ENCODE measurements at regions of chr4 and their contacts with region 1.

Region 1: DNA sequence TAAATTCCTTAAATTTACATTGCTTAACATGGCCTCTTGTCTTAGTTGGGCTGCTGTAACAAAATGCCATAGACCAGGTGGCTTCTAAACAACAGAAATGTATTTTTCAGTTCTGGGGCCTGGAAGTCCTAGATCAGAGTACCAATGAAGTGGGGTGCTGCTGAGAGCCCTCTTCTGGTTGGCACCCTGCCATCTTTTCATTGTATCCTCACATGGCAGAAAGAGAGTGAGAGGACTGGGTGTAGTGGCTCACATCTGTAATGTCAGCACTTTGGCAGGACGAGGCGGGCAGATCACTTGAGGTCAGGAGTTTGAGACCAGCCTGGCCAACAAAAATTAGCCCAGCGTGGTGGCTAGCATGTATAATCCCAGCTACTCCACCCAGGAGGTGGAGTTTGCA is 12.0 kb upstream of the KLB start:
- DNase-seq: no peak
- H3K4me3 ChIP-seq: no peak overlapping the region
- H3K27me3 ChIP-seq: no peaks in the 10 kb centered on the region
- CTCF ChIP-seq: no peak

Region 2: DNA sequence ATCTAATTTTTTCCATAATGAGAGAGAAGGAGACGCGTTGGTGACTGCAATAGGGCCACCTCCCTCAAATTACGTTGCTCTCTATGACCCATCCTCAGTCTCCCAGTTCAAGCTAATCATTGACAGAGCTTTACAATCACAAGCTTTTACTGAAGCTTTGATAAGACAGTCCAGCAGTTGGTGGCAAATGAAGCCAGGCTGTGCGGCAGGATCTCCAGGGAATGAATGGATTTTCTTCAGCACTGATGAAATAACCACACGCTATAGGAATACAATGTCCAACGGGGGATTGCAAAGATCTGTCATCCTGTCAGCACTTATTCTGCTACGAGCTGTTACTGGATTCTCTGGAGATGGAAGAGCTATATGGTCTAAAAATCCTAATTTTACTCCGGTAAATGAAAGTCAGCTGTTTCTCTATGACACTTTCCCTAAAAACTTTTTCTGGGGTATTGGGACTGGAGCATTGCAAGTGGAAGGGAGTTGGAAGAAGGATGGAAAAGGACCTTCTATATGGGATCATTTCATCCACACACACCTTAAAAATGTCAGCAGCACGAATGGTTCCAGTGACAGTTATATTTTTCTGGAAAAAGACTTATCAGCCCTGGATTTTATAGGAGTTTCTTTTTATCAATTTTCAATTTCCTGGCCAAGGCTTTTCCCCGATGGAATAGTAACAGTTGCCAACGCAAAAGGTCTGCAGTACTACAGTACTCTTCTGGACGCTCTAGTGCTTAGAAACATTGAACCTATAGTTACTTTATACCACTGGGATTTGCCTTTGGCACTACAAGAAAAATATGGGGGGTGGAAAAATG is 12.3 kb after region 1 on chr4 and contains the start of gene KLB:
- CTCF ChIA-PET with region 1: interaction called, 10 read pairs
- POLR2A ChIA-PET with region 1: no interaction called
- DNase-seq: no peak
- H3K4me3 ChIP-seq: no peak within 1 kb of the TSS
- H3K27me3 ChIP-seq: no peaks in the 10 kb centered on the region
- CTCF ChIP-seq: no peak
- polyA plus RNA-seq, gene KLB: not detected in 2 replicates

Region 3: DNA sequence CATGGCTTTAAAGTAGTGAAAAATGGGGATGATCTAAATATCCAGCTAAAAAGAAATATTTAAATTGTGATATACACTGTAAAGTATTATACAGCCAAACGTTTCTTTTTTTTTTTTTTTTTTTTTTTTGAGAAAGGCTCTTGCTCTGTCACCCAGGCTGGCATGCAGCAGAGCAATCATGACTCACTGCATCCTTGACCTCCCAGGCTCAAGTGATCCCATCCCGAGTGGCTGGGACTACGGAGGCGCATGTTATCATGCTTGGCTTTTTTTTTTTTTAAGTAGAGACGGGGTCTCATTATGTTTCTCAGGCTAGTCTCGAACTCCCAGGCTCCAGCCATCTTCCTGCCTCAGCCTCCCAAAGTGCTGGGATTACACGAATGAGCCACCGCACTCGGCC is 226.9 kb after region 1 on chr4:
- CTCF ChIA-PET with region 1: no interaction called
- POLR2A ChIA-PET with region 1: interaction called, 17 read pairs
- DNase-seq: no peak
- H3K4me3 ChIP-seq: no peak overlapping the region
- H3K27me3 ChIP-seq: no peaks in the 10 kb centered on the region
- CTCF ChIP-seq: no peak